ENCODE measurements at regions of chr15 and their contacts with region 1.

Region 1: DNA sequence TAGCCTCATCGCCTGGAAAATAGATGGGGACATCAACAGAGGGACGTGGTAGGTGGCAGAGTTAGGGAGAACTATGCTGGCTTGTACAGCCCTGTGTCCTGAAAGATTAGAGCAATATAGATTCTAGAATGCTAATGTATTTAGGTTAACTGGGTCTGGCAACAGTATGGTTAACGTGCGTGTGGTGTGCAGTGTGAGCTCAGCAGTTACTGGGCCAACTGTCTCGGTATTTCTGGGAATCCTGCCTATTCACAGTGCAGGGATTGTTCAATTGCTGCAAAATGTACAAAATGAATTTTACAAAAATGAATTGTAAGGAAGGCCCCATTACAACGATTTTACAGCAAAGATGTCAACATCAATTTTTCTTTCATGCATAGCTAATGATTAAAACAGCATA is 20.6 kb downstream of the MEIS2 start:
- DNase-seq: no peak
- H3K4me3 ChIP-seq: no peak overlapping the region
- H3K27ac ChIP-seq: no peak overlapping the region
- H3K4me1 ChIP-seq: peaks cover 10% of the 10 kb centered on the region
- H3K27me3 ChIP-seq: no peaks in the 10 kb centered on the region
- CTCF ChIP-seq: no peak
- POLR2A ChIP-seq: no peak

Region 2: GRCh38 chr15:36617529-36618196 is 462.1 kb before region 1 on chr15:
- intact Hi-C with region 1: loop called (anchors 5 kb)
- DNase-seq: no peak
- H3K4me3 ChIP-seq: no peak overlapping the region
- H3K27ac ChIP-seq: no peak overlapping the region
- H3K4me1 ChIP-seq: peaks cover 9% of the 10 kb centered on the region
- H3K27me3 ChIP-seq: no peaks in the 10 kb centered on the region
- CTCF ChIP-seq: no peak
- POLR2A ChIP-seq: no peak

Region 3: GRCh38 chr15:37061996-37062607 is 17.6 kb before region 1 on chr15:
- intact Hi-C with region 1: no loop called
- DNase-seq: no peak
- H3K4me3 ChIP-seq: no peak overlapping the region
- H3K27ac ChIP-seq: no peak overlapping the region
- H3K4me1 ChIP-seq: peaks cover 26% of the 10 kb centered on the region
- H3K27me3 ChIP-seq: no peaks in the 10 kb centered on the region
- CTCF ChIP-seq: no peak
- POLR2A ChIP-seq: no peak

Measured in vagina (tissue), 2 donors.